ENCODE measurements at regions of chr14 and their contacts with region 1.

Region 1: DNA sequence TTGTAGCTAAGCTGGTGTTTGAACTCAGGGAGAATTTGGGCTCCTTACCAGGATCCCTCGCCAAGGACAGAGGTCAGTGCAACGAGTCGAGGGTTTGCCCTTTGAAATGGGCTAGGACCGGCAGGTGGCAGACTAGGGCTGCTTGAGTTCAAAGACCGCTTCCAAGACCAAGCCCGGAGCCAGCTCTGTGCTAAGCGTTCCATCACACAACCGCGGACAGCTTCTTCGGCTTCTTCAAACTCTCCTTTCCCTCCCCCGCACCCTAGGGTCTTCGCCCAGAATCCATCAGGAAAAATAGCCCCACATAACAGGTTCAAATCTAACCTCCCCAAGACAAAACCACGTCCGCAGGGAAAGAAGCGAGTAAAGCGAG is 705 bp upstream of the FLVCR2 start:
- DNase-seq: peak; percentile 92
- ATAC-seq: peak; percentile 91
- H3K4me3 ChIP-seq: peak overlapping the region; percentile 65
- H3K27ac ChIP-seq: peak overlapping the region; percentile 80
- H3K4me1 ChIP-seq: peaks cover 17% of the 10 kb centered on the region
- H3K27me3 ChIP-seq: no peaks in the 10 kb centered on the region
- CTCF ChIP-seq: peak; percentile 75

Region 2: DNA sequence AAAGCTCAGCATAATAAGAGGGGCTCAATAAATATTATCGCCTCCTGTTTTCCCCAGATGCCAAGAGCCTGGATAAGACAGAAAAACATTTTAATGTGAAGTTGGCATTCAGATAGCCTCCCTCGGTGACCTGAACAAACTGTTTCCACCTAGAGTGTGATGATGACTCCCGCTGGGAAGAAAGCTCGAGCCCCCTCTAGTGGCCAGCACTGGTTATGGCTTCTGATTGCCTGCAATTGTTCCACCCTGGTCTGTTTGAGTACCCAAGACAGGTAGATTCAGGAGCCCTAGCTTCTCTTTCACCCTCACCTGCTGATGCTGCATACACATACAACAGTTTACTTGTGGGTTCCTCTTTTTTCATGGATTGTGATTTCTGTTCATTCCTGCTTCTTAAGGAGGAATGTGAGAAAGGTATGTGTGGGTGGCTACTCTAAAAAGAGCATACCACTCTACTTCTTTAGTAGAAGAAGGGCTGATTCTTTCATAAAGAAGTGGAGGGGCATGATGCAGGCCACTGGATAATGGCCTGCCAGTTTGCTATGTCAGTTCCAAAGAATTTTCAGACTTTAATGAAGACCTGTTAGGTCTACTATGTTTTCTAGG is 76.5 kb after region 1 on chr14:
- intact Hi-C with region 1: loop called (anchors 5 kb)
- DNase-seq: peak; percentile 83
- ATAC-seq: peak; percentile 82 to 92
- H3K4me3 ChIP-seq: no peak overlapping the region
- H3K27ac ChIP-seq: no peak overlapping the region
- H3K4me1 ChIP-seq: no peaks in the 10 kb centered on the region
- H3K27me3 ChIP-seq: no peaks in the 10 kb centered on the region
- CTCF ChIP-seq: peak; percentile 97

Measured in lower lobe of right lung (tissue), 2 donors.